Activated CD4-positive, alpha-beta T cell treated with anti-CD3 and anti-CD28 coated beads, Interleukin-2, amount 10 ng/mL, durations not matched to agents 24 days and 14 days (primary cell): ENCODE measurements at regions of chr2 and their contacts with region 1.

Region 1: DNA sequence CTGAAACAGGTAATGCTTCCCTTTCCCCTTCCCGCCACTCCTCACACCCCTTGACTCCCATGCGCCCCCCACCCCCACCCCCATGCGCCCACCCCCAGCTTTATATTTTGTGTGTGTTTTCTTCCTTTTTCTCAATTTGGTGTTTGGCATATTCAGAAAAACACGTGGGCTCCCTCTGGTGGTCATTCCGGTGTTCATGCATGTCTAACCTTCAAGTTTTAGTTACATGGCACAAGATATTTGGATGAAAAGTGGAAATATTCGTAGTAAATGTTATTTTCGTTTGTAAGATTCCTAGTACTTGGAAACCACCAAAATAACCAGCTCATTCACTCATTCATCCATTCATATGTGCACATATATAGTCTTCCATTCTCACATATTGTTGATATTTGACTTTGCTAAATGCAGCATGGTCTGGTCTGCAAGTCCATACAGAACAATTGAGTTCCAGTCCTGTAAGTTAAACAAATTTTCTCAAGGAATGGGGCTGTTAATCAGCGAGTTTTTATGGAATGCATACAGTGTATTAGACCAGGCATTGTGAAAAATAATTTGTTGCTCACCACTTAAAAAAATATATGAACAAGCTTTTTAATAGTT is 143.6 kb upstream of the MAP3K20 start:
- DNase-seq: peak; percentile 86
- H3K4me3 Mint-ChIP-seq: no peak overlapping the region
- H3K27ac Mint-ChIP-seq: no peak overlapping the region
- H3K4me1 Mint-ChIP-seq: peaks cover 5% of the 10 kb centered on the region
- H3K27me3 Mint-ChIP-seq: peaks cover 10% of the 10 kb centered on the region

Region 2: DNA sequence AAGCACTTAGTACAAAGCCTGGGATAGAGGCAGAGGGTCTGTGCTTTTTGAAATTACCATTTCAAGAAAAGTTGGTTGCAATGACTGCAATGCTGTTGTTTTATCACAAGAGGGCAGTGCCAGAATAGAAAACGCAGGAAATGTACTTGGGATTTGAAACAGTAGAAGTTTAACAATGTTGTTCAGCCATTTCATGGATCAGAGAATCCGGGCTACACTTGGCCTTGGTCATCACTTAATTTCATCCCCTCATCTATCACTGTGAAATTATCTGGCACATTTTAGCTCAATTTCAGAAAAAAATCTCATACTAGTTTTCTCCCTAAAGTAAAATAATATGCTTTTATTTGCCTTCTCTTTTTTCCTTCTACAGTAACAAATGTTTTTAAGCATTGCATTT is 125.5 kb before region 1 on chr2:
- intact Hi-C with region 1: loop called (anchors 1 kb)
- DNase-seq: peak; percentile 65
- H3K4me3 Mint-ChIP-seq: no peak overlapping the region
- H3K27ac Mint-ChIP-seq: no peak overlapping the region
- H3K4me1 Mint-ChIP-seq: no peaks in the 10 kb centered on the region
- H3K27me3 Mint-ChIP-seq: peaks cover 6% of the 10 kb centered on the region

Region 3: GRCh38 chr2:172864182-172864581 is 67.8 kb before region 1 on chr2:
- intact Hi-C with region 1: loop called (anchors 1 kb)
- DNase-seq: peak; percentile 75
- H3K4me3 Mint-ChIP-seq: no peak overlapping the region
- H3K27ac Mint-ChIP-seq: no peak overlapping the region
- H3K4me1 Mint-ChIP-seq: no peaks in the 10 kb centered on the region
- H3K27me3 Mint-ChIP-seq: peaks cover 9% of the 10 kb centered on the region

Region 4: DNA sequence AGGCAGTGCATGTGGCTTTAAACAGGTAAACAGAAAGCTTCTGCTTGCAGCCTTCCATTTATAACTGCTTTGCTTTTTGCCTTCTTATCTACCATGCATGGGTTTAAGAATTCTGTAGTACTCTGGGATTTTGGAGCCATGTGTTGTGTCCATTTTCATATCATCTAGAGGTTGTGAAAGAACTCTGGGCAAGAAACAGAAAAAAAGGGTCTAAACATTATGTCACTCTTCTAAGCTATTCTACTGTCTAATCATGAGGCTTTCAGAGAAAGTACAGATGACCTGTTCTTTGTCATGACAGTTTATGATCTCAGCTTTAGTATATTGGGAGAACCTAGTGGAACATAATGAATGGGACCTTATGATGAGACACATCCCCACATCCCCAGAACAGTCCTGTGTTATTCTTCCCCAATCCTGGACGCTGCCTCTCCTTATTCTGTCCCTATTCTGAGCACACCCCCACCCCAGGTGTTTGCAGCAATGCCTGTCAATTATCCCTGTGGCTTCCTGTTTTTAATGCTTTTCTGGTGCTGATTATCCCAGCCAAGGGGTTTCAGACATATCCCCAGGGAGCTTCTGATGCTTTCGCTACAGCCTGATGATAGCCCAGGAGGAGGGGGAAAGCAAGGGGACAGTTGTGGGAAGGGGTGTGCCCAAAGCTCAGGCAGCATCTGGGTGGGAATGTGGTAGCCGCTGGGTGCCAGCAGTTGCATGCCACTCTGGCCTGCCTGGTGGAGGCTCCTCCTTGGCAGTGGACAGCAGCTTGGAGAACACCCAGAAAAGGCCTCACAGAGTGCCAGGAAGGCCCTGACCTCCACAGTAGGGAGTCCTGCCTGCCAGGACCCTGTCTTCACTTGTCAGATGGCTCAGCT is 25.8 kb before region 1 on chr2:
- intact Hi-C with region 1: no loop called
- DNase-seq: no peak
- H3K4me3 Mint-ChIP-seq: no peak overlapping the region
- H3K27ac Mint-ChIP-seq: no peak overlapping the region
- H3K4me1 Mint-ChIP-seq: no peaks in the 10 kb centered on the region
- H3K27me3 Mint-ChIP-seq: peaks cover 10% of the 10 kb centered on the region